A549 (cell line): ENCODE measurements at regions of chr3 and their contacts with region 1.

Region 1: DNA sequence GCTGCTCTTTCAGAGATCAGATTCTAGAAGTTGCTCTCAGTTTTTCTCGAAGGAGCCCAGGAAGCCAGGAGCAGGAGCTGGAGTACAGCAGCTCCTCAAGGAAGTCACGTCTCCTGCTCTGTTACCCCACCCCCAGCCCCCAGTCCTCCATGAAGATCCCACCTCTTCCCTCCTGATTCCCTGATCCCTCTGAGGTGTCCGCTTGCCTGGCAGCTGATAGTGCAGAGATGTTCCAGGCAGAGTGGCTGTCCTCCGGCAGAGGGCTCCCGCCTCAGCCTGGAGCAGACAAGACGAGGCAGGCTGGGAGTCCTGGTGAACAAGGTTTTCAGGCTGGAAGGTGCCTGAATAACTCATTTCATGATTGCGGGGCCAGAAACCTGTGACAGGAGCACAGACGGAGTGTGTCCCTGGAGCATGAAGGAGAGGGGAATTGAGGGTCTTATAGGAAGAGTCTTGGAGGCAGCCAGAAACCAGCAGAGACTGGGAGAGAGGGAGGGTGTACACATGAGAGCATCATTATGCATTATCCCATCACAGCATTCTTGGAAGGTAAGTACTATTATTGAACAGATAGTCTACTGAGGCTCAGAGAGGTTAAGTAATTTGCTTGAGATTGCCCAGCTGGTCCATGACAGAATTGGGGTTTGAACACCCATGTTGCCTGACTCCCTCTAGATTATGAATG is 1.2 kb downstream of the HRH1 start:
- DNase-seq: peak; percentile 78 to 87
- ATAC-seq: peak; percentile 91 to 98
- H3K4me3 ChIP-seq: peak overlapping the region; percentile 56
- H3K27ac ChIP-seq: peak overlapping the region; percentile 66 to 83; a peak in 5 of 6 replicates
- H3K4me1 ChIP-seq: peaks cover 7% of the 10 kb centered on the region; the same call in 2 of the 3 replicates
- CTCF ChIP-seq: peak; percentile 83
- EP300 ChIP-seq: no peak
- POLR2A ChIP-seq: no peak
- RAD21 ChIP-seq: peak; percentile 78 to 79

Region 2: GRCh38 chr3:10758304-10759061 is 397.0 kb before region 1 on chr3:
- CTCF ChIA-PET with region 1: interaction called, 14 read pairs
- POLR2A ChIA-PET with region 1: no interaction called
- DNase-seq: peak; percentile 74 to 87
- ATAC-seq: peak; percentile 86 to 99
- H3K4me3 ChIP-seq: no peak overlapping the region
- H3K27ac ChIP-seq: no peak overlapping the region
- H3K4me1 ChIP-seq: no peaks in the 10 kb centered on the region
- CTCF ChIP-seq: peak; percentile 81
- EP300 ChIP-seq: no peak
- POLR2A ChIP-seq: no peak
- RAD21 ChIP-seq: peak; percentile 90 to 96

Region 3: GRCh38 chr3:11140054-11140712 is 15.3 kb before region 1 on chr3:
- CTCF ChIA-PET with region 1: interaction called, 45 read pairs
- POLR2A ChIA-PET with region 1: interaction called, 8 read pairs
- DNase-seq: peak in 1 of 2 experiments; percentile 62
- ATAC-seq: no peak
- H3K4me3 ChIP-seq: no peak overlapping the region
- H3K27ac ChIP-seq: peak overlapping the region; percentile 16 to 66; a peak in 5 of 6 replicates
- H3K4me1 ChIP-seq: peaks cover 29% of the 10 kb centered on the region
- CTCF ChIP-seq: no peak
- EP300 ChIP-seq: no peak
- POLR2A ChIP-seq: no peak
- RAD21 ChIP-seq: no peak

Region 4: GRCh38 chr3:11195721-11196332 is 40.3 kb after region 1 on chr3:
- CTCF ChIA-PET with region 1: interaction called, 74 read pairs
- POLR2A ChIA-PET with region 1: no interaction called
- DNase-seq: no peak
- ATAC-seq: peak; percentile 60 to 67
- H3K4me3 ChIP-seq: no peak overlapping the region
- H3K27ac ChIP-seq: peak overlapping the region; percentile 51 to 74
- H3K4me1 ChIP-seq: peaks cover 19% of the 10 kb centered on the region
- CTCF ChIP-seq: no peak
- EP300 ChIP-seq: no peak
- POLR2A ChIP-seq: no peak
- RAD21 ChIP-seq: no peak

Region 5: GRCh38 chr3:11236595-11237461 is 81.3 kb after region 1 on chr3:
- CTCF ChIA-PET with region 1: interaction called, 13 read pairs
- POLR2A ChIA-PET with region 1: no interaction called
- DNase-seq: peak; percentile 60 to 63
- ATAC-seq: peak; percentile 80 to 88; a peak in 5 of 6 replicates
- H3K4me3 ChIP-seq: no peak overlapping the region
- H3K27ac ChIP-seq: no peak overlapping the region
- H3K4me1 ChIP-seq: no peaks in the 10 kb centered on the region
- CTCF ChIP-seq: peak; percentile 91
- EP300 ChIP-seq: no peak
- POLR2A ChIP-seq: no peak
- RAD21 ChIP-seq: peak; percentile 71 to 74

Region 6: DNA sequence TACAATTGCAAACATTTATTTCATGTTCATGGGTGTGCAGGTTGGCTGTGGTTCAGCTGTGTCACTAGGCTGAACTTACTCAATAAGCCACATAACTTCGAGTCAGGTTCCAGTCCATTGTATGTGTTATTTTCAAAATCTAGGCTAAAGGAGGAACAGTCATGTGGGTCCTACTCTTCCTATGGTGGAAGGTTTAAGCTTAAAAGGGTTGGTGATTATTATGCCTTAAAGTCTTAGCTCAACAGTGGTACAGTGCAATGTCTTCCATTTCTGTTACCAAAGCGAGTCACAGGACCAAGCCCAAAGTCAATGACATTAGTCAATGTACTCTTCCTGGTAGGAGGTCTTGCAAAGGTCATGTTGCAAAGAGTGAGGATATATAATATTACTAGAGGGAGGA is 194.9 kb after region 1 on chr3:
- CTCF ChIA-PET with region 1: interaction called, 11 read pairs
- POLR2A ChIA-PET with region 1: no interaction called
- DNase-seq: peak in 1 of 2 experiments; percentile 16
- ATAC-seq: no peak
- H3K4me3 ChIP-seq: no peak overlapping the region
- H3K27ac ChIP-seq: no peak overlapping the region
- H3K4me1 ChIP-seq: peaks cover 9% of the 10 kb centered on the region; the same call in 2 of the 3 replicates
- CTCF ChIP-seq: no peak
- EP300 ChIP-seq: no peak
- POLR2A ChIP-seq: no peak
- RAD21 ChIP-seq: no peak